ENCODE measurements at regions of chr10 and their contacts with region 1.

Region 1: GRCh38 chr10:94240901-94241300 is 121.8 kb downstream of the NOC3L start:
- DNase-seq: no peak
- H3K4me3 ChIP-seq: no peak overlapping the region
- H3K27ac ChIP-seq: no peak overlapping the region
- H3K4me1 ChIP-seq: no peaks in the 10 kb centered on the region
- H3K27me3 ChIP-seq: no peaks in the 10 kb centered on the region
- CTCF ChIP-seq: no peak

Region 2: DNA sequence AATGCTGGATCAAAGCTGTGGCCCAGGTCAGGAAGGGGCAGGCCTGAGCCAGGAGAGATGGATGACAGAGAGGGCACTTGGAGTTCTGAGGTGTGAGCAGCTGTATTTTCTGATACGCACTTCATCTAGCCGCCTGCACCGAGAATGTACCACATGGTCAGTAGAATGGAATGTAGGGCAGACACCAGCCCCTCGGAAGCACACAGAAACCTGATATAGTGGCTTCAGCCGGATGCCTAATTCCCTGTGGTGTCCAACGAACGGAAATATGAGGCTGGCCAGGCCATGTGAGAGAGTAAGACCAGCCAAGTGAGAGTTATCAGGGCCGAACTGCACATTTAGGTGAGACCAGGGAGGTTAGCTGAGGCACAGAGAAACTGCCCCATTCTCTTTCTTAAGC is 293.8 kb before region 1 on chr10:
- CTCF ChIA-PET with region 1: no interaction called
- POLR2A ChIA-PET with region 1: interaction called, 15 read pairs
- intact Hi-C with region 1: no loop called
- DNase-seq: peak in 1 of 2 experiments; percentile 45
- H3K4me3 ChIP-seq: no peak overlapping the region
- H3K27ac ChIP-seq: no peak overlapping the region
- H3K4me1 ChIP-seq: no peaks in the 10 kb centered on the region
- H3K27me3 ChIP-seq: no peaks in the 10 kb centered on the region
- CTCF ChIP-seq: no peak

Region 3: GRCh38 chr10:94183666-94184264 is 57.1 kb before region 1 on chr10:
- CTCF ChIA-PET with region 1: no interaction called
- POLR2A ChIA-PET with region 1: no interaction called
- intact Hi-C with region 1: no loop called
- DNase-seq: peak; percentile 35 to 47
- H3K4me3 ChIP-seq: no peak overlapping the region
- H3K27ac ChIP-seq: no peak overlapping the region
- H3K4me1 ChIP-seq: 0 out of 2 replicates have a peak, but pooled peaks cover 6% of the 10 kb centered on the region
- H3K27me3 ChIP-seq: no peaks in the 10 kb centered on the region
- CTCF ChIP-seq: no peak

Region 4: GRCh38 chr10:94264085-94264484 is 23.2 kb after region 1 on chr10:
- CTCF ChIA-PET with region 1: no interaction called
- POLR2A ChIA-PET with region 1: interaction called, 12 read pairs
- intact Hi-C with region 1: no loop called
- DNase-seq: no peak
- H3K4me3 ChIP-seq: no peak overlapping the region
- H3K27ac ChIP-seq: no peak overlapping the region
- H3K4me1 ChIP-seq: no peaks in the 10 kb centered on the region
- H3K27me3 ChIP-seq: no peaks in the 10 kb centered on the region
- CTCF ChIP-seq: no peak